WTC11 (cell line): ENCODE measurements at regions of chr20 and their contacts with region 1.

Region 1: GRCh38 chr20:58481481-58482021 is 33.6 kb downstream of the APCDD1L start:
- DNase-seq: peak; percentile 86
- ATAC-seq: peak; percentile 96
- H3K4me3 Mint-ChIP-seq: peak overlapping the region; percentile 31; the same call in 1 of the 2 replicates
- H3K27ac Mint-ChIP-seq: no peak overlapping the region
- H3K4me1 Mint-ChIP-seq: peaks cover 10% of the 10 kb centered on the region
- H3K27me3 Mint-ChIP-seq: peaks cover 4% of the 10 kb centered on the region; the same call in 1 of the 2 replicates
- CTCF ChIP-seq: peak; percentile 92

Region 2: DNA sequence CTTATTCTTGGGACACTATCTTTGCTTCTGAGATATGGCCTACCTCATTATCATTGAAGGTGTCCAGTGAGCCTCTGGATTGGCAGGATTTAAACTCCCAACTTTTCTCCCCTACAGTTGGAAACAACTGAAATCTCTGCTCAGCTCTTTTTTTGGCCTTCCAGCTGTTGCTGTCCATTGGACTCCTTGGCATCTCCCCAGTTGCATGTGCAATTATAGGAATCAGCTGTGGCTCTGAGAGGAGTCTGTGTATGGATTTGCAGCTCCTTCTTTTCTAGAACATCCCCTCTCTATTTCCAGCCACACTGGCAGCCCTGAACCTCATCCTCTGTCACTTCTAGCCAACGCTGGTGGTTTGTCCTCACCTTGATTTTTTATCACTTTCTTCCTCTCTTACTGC is 150.9 kb before region 1 on chr20:
- CTCF ChIA-PET with region 1: no interaction called
- POLR2A ChIA-PET with region 1: no interaction called
- DNase-seq: no peak
- ATAC-seq: no peak
- H3K4me3 Mint-ChIP-seq: no peak overlapping the region
- H3K27ac Mint-ChIP-seq: no peak overlapping the region; the same call in 1 of the 2 replicates
- H3K4me1 Mint-ChIP-seq: peaks cover 14% of the 10 kb centered on the region
- H3K27me3 Mint-ChIP-seq: no peaks in the 10 kb centered on the region
- CTCF ChIP-seq: no peak

Region 3: GRCh38 chr20:58515233-58516184 is 34.0 kb after region 1 on chr20 and contains the start of gene APCDD1L:
- CTCF ChIA-PET with region 1: interaction called, 24 read pairs
- POLR2A ChIA-PET with region 1: interaction called, 4 read pairs
- DNase-seq: no peak
- ATAC-seq: peak; percentile 67
- H3K4me3 Mint-ChIP-seq: peak within 1 kb of the TSS; percentile 78
- H3K27ac Mint-ChIP-seq: no peak within 1 kb of the TSS
- H3K4me1 Mint-ChIP-seq: peaks cover 23% of the 10 kb centered on the region
- H3K27me3 Mint-ChIP-seq: peaks cover 64% of the 10 kb centered on the region
- CTCF ChIP-seq: no peak
- total RNA-seq, gene APCDD1L: 2.4 to 3.2 TPM (median 2.5 TPM) in 3 replicates

Region 4: DNA sequence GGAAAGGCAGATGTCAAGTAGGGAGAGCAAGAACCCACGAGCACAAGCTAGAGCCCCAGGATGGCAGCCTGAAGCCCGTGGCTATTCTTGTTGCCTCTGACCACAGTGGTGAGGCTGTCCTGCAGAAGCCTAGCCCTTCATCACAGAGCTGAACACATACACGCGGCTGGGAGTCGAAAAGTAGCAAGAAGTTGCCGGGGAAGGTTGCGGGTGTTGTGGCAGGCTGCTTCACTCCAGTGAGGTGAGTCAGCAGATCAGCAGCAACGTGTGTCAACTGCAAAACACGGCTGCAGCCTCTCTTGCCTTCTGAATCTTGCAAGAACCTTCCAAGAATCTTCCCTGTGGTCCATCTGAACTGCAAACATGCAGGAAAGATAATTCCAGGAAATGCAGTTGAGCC is 158.9 kb after region 1 on chr20:
- CTCF ChIA-PET with region 1: interaction called, 17 read pairs
- POLR2A ChIA-PET with region 1: no interaction called
- DNase-seq: no peak
- ATAC-seq: no peak
- H3K4me3 Mint-ChIP-seq: no peak overlapping the region
- H3K27ac Mint-ChIP-seq: no peak overlapping the region
- H3K4me1 Mint-ChIP-seq: peaks cover 8% of the 10 kb centered on the region
- H3K27me3 Mint-ChIP-seq: peaks cover 8% of the 10 kb centered on the region
- CTCF ChIP-seq: no peak

Region 5: GRCh38 chr20:58659841-58660240 is 178.3 kb after region 1 on chr20:
- CTCF ChIA-PET with region 1: interaction called, 10 read pairs
- POLR2A ChIA-PET with region 1: no interaction called
- DNase-seq: no peak
- ATAC-seq: peak; percentile 61
- H3K4me3 Mint-ChIP-seq: peak overlapping the region; percentile 6; the same call in 1 of the 2 replicates
- H3K27ac Mint-ChIP-seq: 0 out of 2 replicates have a peak overlapping the region, but pooled peaks have one; percentile 1
- H3K4me1 Mint-ChIP-seq: peaks cover 90% of the 10 kb centered on the region
- H3K27me3 Mint-ChIP-seq: no peaks in the 10 kb centered on the region
- CTCF ChIP-seq: no peak

Region 6: GRCh38 chr20:58692594-58693226 is 211.2 kb after region 1 on chr20 and contains the start of gene NPEPL1:
- CTCF ChIA-PET with region 1: interaction called, 13 read pairs
- POLR2A ChIA-PET with region 1: interaction called, 3 read pairs
- DNase-seq: peak; percentile 58
- ATAC-seq: peak; percentile 79
- H3K4me3 Mint-ChIP-seq: peak within 1 kb of the TSS; percentile 58
- H3K27ac Mint-ChIP-seq: peak within 1 kb of the TSS; percentile 96
- H3K4me1 Mint-ChIP-seq: peaks cover 41% of the 10 kb centered on the region
- H3K27me3 Mint-ChIP-seq: no peaks in the 10 kb centered on the region
- CTCF ChIP-seq: no peak
- total RNA-seq, gene NPEPL1: 35.3 to 39.9 TPM (median 35.8 TPM) in 3 replicates

Region 7: DNA sequence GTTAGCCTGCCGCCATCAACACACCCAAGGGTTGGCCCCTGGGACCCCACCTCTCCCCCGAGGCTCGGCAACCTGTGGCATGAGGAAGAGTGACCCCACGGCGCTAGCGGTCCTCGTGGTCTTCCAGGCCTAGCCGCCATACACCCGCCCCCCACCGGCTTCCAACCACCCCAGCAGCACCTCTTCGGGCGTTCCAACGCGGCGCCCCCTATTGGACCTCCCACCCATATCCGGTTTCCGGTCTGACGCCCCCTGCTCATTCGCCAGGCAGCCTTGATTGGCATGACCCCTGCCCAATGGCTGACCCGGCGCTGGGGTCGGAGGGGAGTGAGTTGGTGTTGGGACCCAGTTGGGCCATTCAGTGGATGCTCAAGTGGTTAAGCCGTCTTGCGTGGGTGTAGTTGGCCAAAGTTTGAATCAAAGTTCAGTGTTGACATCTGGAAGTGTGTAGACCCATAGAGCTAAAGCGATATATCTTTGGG is 369.2 kb after region 1 on chr20 and contains the start of gene GNAS-AS1:
- CTCF ChIA-PET with region 1: interaction called, 28 read pairs
- POLR2A ChIA-PET with region 1: no interaction called
- DNase-seq: peak; percentile 95
- ATAC-seq: peak; percentile 60
- H3K4me3 Mint-ChIP-seq: peak within 1 kb of the TSS; percentile 74
- H3K27ac Mint-ChIP-seq: peak within 1 kb of the TSS; percentile 94
- H3K4me1 Mint-ChIP-seq: peaks cover 72% of the 10 kb centered on the region
- H3K27me3 Mint-ChIP-seq: peaks cover 48% of the 10 kb centered on the region
- CTCF ChIP-seq: no peak; the same call in 1 of the 2 replicates
- total RNA-seq, gene GNAS-AS1: 12.2 to 13.4 TPM (median 12.8 TPM) in 3 replicates